Panc1 (cell line): ENCODE measurements at regions of chr1 and their contacts with region 1.

Region 1: DNA sequence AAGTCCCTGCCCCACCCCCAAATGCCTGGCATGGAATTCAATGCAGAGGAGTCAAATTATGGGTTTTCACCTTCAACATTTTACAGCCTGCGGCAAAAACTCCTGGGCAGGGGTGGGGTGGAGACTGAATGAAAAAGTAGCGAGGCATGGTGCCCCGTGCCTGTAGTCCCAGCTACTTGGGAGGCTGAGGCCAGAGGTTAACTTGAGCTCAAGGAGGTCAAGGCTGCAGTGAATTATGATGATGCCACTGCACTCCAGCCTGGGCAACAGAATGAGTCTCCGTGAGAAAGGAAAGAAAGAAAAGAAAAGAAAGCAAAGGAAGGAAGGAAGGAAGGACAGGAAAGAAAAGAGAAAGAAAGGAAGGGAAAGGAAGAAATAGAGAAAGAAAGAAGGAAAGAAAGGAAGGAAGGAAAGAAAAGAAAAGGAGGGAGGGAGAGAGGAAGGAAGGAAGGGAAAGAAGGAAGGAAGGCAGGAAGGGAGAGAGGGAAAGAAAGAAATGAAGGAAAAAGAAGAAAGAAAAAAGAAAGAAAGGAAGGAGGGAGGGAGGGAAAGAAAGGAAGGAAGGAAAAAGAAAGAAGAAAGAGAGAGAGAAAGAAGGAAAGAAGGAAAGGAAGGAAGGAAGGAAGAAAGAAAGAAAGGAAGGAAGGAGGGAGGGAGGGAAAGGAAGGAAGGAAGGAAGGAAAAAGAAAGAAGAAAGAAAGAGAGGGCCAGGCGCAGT is 11.1 kb downstream of the LEMD1 start:
- DNase-seq: no peak
- ATAC-seq: no peak
- H3K4me3 ChIP-seq: no peak overlapping the region
- H3K27ac ChIP-seq: no peak overlapping the region
- H3K4me1 ChIP-seq: no peaks in the 10 kb centered on the region
- H3K27me3 ChIP-seq: peaks cover 5% of the 10 kb centered on the region
- CTCF ChIP-seq: no peak

Region 2: GRCh38 chr1:205421798-205422197 is 11.1 kb after region 1 on chr1 and contains the start of gene LEMD1:
- CTCF ChIA-PET with region 1: no interaction called
- POLR2A ChIA-PET with region 1: interaction called, 11 read pairs
- in situ Hi-C with region 1: no loop called
- intact Hi-C with region 1: no loop called
- DNase-seq: no peak
- ATAC-seq: no peak
- H3K4me3 ChIP-seq: no peak within 1 kb of the TSS
- H3K27ac ChIP-seq: no peak within 1 kb of the TSS
- H3K4me1 ChIP-seq: no peaks in the 10 kb centered on the region
- H3K27me3 ChIP-seq: peaks cover 31% of the 10 kb centered on the region
- CTCF ChIP-seq: no peak
- total RNA-seq, gene LEMD1: not detected